ENCODE measurements at regions of chr3 and their contacts with region 1.

Region 1: GRCh38 chr3:149812606-149813366 is at the start of gene RNF13:
- DNase-seq: peak; percentile 90 to 94 (median 91)
- H3K4me3 ChIP-seq: peak within 1 kb of the TSS; percentile 91 to 92
- H3K4me3 Mint-ChIP-seq: peak within 1 kb of the TSS; percentile 99 to 100 (median 100)
- H3K27ac ChIP-seq: peak within 1 kb of the TSS; percentile 88
- H3K27ac Mint-ChIP-seq: peak within 1 kb of the TSS; percentile 96 to 100 (median 99)
- H3K4me1 ChIP-seq: peaks cover 42% of the 10 kb centered on the region
- H3K4me1 Mint-ChIP-seq: peaks cover 34 to 63% (median 45%) of the 10 kb centered on the region in 4 donors
- H3K27me3 ChIP-seq: no peaks in the 10 kb centered on the region
- H3K27me3 Mint-ChIP-seq: peaks cover 2 to 4% of the 10 kb centered on the region in 2 donors
- total RNA-seq, gene RNF13: 63.3 to 68.2 TPM

Region 2: DNA sequence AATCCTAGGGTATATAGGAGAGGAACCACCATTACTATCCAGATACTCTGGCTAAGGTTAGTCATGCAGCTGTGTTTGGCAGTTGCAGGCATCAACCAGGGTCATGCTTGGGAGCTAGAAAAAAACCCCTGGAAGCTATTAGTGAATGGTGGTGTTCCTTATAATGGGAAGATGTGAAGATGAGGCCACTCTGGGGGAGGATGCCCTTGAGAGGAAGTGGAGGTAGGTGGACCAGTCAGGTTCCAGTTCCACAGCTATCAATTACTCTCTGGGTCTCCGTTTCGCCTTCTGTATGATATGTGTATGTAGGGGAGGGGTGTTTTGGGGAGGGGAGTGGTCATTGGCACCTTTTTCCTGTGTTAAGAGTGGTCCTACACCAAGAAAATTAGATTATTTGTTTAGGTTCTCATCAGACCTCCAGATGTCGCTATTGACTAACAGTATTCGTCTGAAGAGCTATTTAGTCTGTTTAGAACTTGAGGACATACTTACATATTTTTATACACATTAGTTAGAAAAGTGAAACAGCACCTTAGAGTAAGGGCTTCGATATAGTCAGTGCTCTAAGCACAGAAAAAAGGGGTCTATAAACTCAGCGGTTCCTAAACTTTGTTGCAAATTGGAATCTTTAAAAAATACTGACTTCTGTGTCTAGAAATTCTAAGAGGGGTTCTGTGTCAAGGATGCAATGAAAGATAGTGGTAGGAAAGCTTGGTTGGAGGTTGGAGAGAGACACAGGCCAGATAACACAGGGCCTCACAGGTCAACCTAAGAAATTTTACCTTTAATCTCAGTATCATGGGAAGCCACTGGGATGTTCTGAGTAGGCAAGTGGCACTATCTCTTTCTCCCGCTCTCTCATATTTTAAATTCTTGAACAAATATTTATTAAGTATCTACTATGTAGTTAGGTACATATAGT is 692.5 kb before region 1 on chr3:
- CTCF ChIA-PET with region 1: interaction called, 30 read pairs
- POLR2A ChIA-PET with region 1: no interaction called
- intact Hi-C with region 1: loop called (anchors 1 kb)
- DNase-seq: peak in 4 of 5 donors; percentile 49 to 54 (median 51)
- H3K4me3 ChIP-seq: no peak overlapping the region
- H3K4me3 Mint-ChIP-seq: no peak overlapping the region
- H3K27ac ChIP-seq: no peak overlapping the region
- H3K27ac Mint-ChIP-seq: no peak overlapping the region
- H3K4me1 ChIP-seq: no peaks in the 10 kb centered on the region
- H3K4me1 Mint-ChIP-seq: peaks cover 0 to 3% (median 2%) of the 10 kb centered on the region in 4 donors
- H3K27me3 ChIP-seq: no peaks in the 10 kb centered on the region
- H3K27me3 Mint-ChIP-seq: peaks cover 3 to 8% of the 10 kb centered on the region in 2 donors

Region 3: DNA sequence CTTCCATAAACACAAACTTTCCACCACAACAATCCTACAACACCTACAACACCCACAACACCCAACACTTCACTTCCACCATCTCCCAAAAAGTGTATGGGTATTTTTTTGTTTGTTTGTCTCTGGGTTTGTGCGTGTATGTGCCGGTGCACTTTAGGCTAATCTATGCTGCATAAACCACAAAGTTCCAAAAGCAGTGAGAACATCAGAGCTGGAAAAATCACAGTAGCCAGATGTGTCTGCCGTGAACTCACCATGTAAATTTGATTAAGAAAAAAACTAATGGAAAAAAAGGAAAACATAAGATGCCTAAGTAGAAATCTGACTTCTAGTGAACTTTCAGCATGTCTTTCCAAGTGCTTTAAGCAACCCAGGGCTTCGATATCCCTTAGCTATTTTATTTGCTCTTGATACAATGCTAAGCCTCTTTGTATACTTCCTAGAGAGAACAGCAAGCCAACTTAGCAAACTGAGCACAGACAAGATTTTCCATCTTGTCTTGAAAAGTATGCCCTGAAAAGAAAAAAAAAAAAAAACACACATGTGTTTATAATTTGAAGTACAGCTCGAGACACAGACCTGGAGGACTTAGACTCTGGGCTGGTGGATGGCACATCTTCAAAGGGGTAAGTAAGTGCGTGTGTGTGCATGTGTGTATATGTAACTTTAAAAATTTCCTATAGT is 246.4 kb before region 1 on chr3:
- CTCF ChIA-PET with region 1: interaction called, 7 read pairs
- POLR2A ChIA-PET with region 1: no interaction called
- intact Hi-C with region 1: loop called (anchors 10 kb)
- DNase-seq: no peak
- H3K4me3 ChIP-seq: no peak overlapping the region
- H3K4me3 Mint-ChIP-seq: no peak overlapping the region
- H3K27ac ChIP-seq: no peak overlapping the region
- H3K27ac Mint-ChIP-seq: no peak overlapping the region
- H3K4me1 ChIP-seq: no peaks in the 10 kb centered on the region
- H3K4me1 Mint-ChIP-seq: peaks cover 0 to 1% (median 0%) of the 10 kb centered on the region in 4 donors
- H3K27me3 ChIP-seq: no peaks in the 10 kb centered on the region
- H3K27me3 Mint-ChIP-seq: peaks cover 0 to 2% of the 10 kb centered on the region in 2 donors

Region 4: DNA sequence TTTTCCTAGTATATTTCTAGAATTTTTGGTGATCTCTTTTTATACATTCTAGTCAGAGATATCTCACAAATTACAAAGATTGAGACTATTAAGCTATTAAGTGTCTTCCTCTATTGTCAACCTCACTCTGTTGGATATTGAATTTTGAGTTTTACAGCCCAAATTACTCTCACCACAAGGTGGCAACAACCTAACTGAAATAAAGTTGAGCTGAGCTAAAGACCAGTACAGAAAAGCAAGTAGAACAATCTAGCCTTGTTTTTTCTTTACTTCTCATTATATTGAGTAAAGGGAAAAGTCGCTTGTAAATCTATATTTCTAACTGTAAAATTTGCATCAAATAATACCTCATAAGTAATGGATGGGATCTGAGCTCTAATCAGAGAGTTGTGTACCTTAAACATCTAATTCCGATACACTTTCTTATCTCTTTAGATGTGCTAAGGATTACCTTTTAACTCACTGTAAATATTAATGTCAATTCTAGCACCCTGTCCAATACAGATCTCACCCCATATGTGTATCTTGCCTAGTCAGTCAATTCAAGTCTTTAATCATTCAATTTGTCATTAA is 46.9 kb before region 1 on chr3:
- CTCF ChIA-PET with region 1: interaction called, 37 read pairs
- POLR2A ChIA-PET with region 1: interaction called, 6 read pairs
- intact Hi-C with region 1: no loop called
- DNase-seq: no peak
- H3K4me3 ChIP-seq: no peak overlapping the region
- H3K4me3 Mint-ChIP-seq: no peak overlapping the region
- H3K27ac ChIP-seq: no peak overlapping the region
- H3K27ac Mint-ChIP-seq: no peak overlapping the region
- H3K4me1 ChIP-seq: no peaks in the 10 kb centered on the region
- H3K4me1 Mint-ChIP-seq: no peaks in the 10 kb centered on the region
- H3K27me3 ChIP-seq: peaks cover 14% of the 10 kb centered on the region
- H3K27me3 Mint-ChIP-seq: peaks cover 13 to 14% of the 10 kb centered on the region in 2 donors

Region 5: GRCh38 chr3:149792452-149793270 is 20.1 kb before region 1 on chr3 and contains the start of gene ANKUB1:
- CTCF ChIA-PET with region 1: interaction called, 15 read pairs
- POLR2A ChIA-PET with region 1: no interaction called
- intact Hi-C with region 1: no loop called
- DNase-seq: no peak
- H3K4me3 ChIP-seq: no peak within 1 kb of the TSS
- H3K4me3 Mint-ChIP-seq: no peak within 1 kb of the TSS
- H3K27ac ChIP-seq: no peak within 1 kb of the TSS
- H3K27ac Mint-ChIP-seq: no peak within 1 kb of the TSS
- H3K4me1 ChIP-seq: no peaks in the 10 kb centered on the region
- H3K4me1 Mint-ChIP-seq: no peaks in the 10 kb centered on the region
- H3K27me3 ChIP-seq: peaks cover 11% of the 10 kb centered on the region
- H3K27me3 Mint-ChIP-seq: peaks cover 16 to 24% of the 10 kb centered on the region in 2 donors
- total RNA-seq, gene ANKUB1: not detected

Region 6: DNA sequence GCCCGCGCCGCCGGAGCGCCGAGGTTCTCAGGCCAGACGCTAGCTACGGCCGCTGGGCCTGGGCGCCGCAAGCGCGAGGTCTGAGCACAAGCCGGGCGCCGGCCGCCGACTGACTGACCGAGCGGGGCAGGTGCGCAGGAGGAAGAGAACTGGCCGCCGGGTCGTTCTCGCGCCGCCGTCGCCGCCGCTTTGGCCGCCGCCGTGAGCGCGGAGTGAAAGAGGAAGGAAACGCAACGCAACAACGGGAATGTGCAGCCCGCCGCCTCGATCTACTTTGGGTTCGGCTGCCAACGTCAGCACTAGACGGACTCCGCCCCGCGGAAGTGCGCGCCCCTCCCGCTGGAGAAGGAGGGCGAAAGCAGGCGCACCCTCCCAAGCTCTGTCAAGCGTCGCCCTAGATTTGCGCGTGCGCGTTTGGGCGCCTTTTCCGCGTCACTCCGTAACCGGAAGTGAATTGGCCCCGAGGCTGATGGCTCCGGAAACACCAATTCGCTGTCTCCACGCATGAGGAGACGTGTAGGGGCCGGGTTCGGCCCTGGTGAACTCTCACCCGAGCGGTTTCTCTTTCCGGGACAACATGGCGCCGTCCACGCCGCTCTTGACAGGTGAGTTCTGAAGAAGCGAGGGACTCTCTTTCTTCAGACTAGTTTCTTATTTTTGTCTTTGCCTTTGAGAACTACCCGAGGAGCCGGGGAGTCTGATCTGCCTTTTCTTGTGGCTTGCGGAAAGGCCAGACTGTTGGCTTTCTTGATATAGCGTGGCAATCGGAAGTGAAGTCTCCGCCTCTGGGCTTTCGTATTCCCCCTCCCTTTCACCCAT is 733.6 kb after region 1 on chr3 and contains the starts of genes EIF2A and SERP1:
- CTCF ChIA-PET with region 1: no interaction called
- POLR2A ChIA-PET with region 1: no interaction called
- intact Hi-C with region 1: loop called (anchors 1 kb)
- DNase-seq: peak; percentile 99 to 100 (median 100)
- H3K4me3 ChIP-seq: peak within 1 kb of the TSS; percentile 77 to 89
- H3K4me3 Mint-ChIP-seq: peak within 1 kb of the TSS; percentile 92 to 99 (median 97)
- H3K27ac ChIP-seq: peak within 1 kb of the TSS; percentile 99
- H3K27ac Mint-ChIP-seq: peak within 1 kb of the TSS; percentile 95 to 100 (median 99)
- H3K4me1 ChIP-seq: peaks cover 62% of the 10 kb centered on the region
- H3K4me1 Mint-ChIP-seq: peaks cover 39 to 81% (median 61%) of the 10 kb centered on the region in 4 donors
- H3K27me3 ChIP-seq: no peaks in the 10 kb centered on the region
- H3K27me3 Mint-ChIP-seq: no peaks in the 10 kb centered on the region
- total RNA-seq, gene EIF2A: 90.8 to 95.3 TPM
- total RNA-seq, gene SERP1: 122 to 128 TPM

Region 7: GRCh38 chr3:150763122-150763841 is 950.5 kb after region 1 on chr3 and contains the start of gene SIAH2:
- CTCF ChIA-PET with region 1: no interaction called
- POLR2A ChIA-PET with region 1: interaction called, 4 read pairs
- intact Hi-C with region 1: loop called (anchors 5 kb)
- DNase-seq: peak; percentile 94 to 98 (median 95)
- H3K4me3 ChIP-seq: peak within 1 kb of the TSS; percentile 80 to 97
- H3K4me3 Mint-ChIP-seq: peak within 1 kb of the TSS; percentile 97 to 100 (median 98)
- H3K27ac ChIP-seq: peak within 1 kb of the TSS; percentile 98
- H3K27ac Mint-ChIP-seq: peak within 1 kb of the TSS; percentile 98 to 100 (median 100)
- H3K4me1 ChIP-seq: peaks cover 47% of the 10 kb centered on the region
- H3K4me1 Mint-ChIP-seq: peaks cover 26 to 60% (median 47%) of the 10 kb centered on the region in 4 donors
- H3K27me3 ChIP-seq: no peaks in the 10 kb centered on the region
- H3K27me3 Mint-ChIP-seq: no peaks in the 10 kb centered on the region
- total RNA-seq, gene SIAH2: 28.3 to 29.5 TPM

Measured in CD4-positive, alpha-beta memory T cell (primary cell).